Posterior vena cava (tissue), 2 donors: ENCODE measurements at regions of chr21 and their contacts with region 1.

Region 1: DNA sequence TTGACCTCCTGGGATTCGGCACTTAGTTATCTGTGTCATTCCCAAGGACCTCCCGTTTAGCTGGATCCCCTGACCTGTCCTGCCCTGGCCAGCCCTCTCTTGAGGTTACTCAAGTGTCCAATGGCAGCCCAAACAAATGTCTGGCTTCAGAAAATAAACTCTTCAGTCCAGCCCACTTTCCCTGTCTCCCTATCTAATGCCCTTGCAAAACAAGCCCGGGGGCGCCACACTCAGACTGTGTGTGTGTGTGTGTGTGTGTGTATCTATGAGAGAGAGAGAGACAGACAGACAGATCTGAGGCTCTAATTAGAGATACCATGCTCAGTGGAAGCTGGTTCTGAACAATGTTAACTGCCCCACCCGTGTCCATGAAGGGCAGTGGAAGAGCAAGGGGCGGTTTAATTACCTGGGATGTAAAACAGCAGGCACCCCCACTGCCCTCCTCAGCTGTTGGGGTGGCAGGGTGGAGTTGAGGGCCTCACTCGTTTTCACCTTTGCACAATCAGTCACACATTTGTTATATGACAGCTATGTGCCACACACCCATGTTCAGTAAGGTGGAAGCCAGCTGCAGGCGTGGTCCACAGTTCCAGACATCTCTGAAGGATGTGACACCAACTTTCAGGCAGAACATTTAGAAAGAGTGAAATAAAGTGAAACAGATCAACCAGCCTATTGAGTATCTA is 57.4 kb downstream of the B3GALT5 start:
- DNase-seq: no peak

Region 2: DNA sequence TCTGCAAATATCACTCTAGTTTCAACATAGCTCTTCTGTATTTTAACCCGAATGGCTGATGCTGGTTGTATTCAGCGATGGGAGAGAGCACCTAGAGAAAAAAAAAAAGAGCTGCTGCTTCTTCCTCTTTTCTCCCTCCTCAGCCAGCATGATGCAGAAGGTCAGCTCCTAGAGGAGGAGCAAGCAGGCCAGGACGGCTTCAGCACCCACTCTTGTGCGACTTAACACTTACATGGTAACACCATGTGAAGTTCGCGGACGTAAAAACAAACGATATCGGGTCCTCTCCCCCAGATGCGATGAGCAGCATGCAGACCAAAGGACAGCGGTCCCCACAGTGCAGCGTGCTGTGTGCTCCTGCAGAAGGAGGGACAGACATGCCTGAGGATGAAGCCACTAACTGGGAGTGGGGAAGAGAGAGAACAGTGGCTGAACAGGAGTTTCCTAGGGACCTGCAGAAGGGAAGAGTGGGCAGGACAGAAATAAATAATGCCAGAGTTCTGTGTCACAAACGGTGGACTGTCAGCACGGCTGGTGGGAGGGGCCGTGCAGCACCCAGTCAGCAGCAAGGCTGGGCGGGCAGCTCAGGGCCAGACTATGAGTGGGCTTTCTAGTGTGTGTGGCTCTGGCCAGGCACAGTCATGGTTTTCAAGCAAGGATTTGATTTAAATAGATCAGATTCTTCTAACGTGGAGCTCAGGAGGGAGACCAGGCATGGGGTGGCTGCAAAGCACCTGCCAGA is 68.8 kb before region 1 on chr21:
- intact Hi-C with region 1: loop called in 1 of 2 experiments (anchors 5 kb)
- DNase-seq: no peak

Region 3: GRCh38 chr21:39647476-39647875 is 22.6 kb before region 1 on chr21:
- intact Hi-C with region 1: no loop called
- DNase-seq: no peak